ENCODE measurements at regions of chr15 and their contacts with region 1.

Region 1: DNA sequence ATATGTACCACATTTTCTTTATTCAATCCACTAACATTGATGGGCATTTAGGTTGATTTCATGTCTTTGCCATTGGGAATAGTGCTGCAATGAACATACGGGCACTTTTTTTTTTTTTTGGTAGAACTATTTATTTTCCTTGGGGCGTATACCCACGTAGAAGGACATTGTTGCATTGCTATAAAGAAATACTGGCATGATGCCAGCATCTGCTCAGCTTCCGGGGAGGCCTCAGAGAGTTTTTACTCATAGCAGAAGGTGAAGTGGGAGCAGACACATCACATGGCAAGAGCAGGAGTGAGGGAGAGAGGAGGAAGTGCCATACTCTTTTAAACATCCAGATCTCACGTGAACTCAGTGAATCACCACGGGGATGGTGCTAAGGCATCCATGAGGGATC is 197.0 kb downstream of the SQOR start:
- DNase-seq: no peak
- H3K4me3 ChIP-seq: no peak overlapping the region
- H3K27ac ChIP-seq: no peak overlapping the region
- H3K4me1 ChIP-seq: no peaks in the 10 kb centered on the region
- H3K27me3 ChIP-seq: no peaks in the 10 kb centered on the region
- CTCF ChIP-seq: no peak

Region 2: DNA sequence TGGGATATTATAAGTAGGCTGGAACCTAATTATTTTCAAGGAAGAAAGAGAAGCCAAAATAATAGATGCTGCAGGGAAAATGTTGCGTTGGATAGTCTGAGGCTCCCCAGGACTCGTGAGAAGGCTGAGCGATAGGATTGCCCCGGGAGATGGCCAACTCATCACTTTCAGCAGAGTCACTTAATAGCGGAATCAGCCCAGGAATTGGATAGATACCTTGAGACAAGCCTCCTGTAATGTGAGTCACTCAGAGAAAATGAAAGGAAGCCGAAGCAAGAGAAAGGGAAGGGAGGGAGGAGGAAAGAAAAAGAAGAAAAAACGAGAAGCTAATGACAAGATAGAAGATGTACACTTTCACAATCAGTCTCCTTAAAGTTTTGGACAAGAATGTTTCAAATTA is 102.6 kb before region 1 on chr15:
- CTCF ChIA-PET with region 1: no interaction called
- POLR2A ChIA-PET with region 1: no interaction called
- intact Hi-C with region 1: no loop called
- DNase-seq: no peak
- H3K4me3 ChIP-seq: no peak overlapping the region
- H3K27ac ChIP-seq: no peak overlapping the region
- H3K4me1 ChIP-seq: no peaks in the 10 kb centered on the region
- H3K27me3 ChIP-seq: peaks cover 53% of the 10 kb centered on the region
- CTCF ChIP-seq: no peak

Region 3: DNA sequence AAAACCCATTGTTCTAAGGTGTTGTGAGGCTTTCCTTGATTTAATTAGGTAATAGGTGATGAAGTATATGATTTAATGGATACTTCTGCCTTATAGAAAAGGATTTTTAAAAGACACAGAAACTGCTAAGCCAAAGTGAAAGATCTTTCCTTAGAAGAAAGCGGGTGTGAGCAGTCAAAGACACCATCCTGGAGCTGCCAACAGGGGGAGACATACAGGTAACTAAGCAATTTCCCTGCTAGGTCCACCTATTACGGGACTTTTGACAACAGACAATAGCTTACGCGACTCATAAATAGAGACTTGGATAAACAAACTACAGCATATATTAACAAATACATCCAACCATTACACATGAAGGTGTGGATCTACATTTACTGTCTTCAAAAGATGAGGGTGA is 472.5 kb after region 1 on chr15:
- CTCF ChIA-PET with region 1: interaction called, 19 read pairs
- POLR2A ChIA-PET with region 1: no interaction called
- intact Hi-C with region 1: no loop called
- DNase-seq: peak in 1 of 2 experiments; percentile 4
- H3K4me3 ChIP-seq: no peak overlapping the region
- H3K27ac ChIP-seq: no peak overlapping the region
- H3K4me1 ChIP-seq: no peaks in the 10 kb centered on the region
- H3K27me3 ChIP-seq: no peaks in the 10 kb centered on the region
- CTCF ChIP-seq: peak; percentile 70

Measured in PC-9 (cell line).